ENCODE measurements at regions of chr7 and their contacts with region 1.

Region 1: GRCh38 chr7:90483251-90483650 is 13.8 kb downstream of the PTTG1IP2 start:
- DNase-seq: no peak
- ATAC-seq: no peak
- H3K4me3 ChIP-seq: no peak overlapping the region
- H3K27ac ChIP-seq: no peak overlapping the region
- H3K4me1 ChIP-seq: no peaks in the 10 kb centered on the region
- H3K27me3 ChIP-seq: no peaks in the 10 kb centered on the region
- CTCF ChIP-seq: no peak

Region 2: DNA sequence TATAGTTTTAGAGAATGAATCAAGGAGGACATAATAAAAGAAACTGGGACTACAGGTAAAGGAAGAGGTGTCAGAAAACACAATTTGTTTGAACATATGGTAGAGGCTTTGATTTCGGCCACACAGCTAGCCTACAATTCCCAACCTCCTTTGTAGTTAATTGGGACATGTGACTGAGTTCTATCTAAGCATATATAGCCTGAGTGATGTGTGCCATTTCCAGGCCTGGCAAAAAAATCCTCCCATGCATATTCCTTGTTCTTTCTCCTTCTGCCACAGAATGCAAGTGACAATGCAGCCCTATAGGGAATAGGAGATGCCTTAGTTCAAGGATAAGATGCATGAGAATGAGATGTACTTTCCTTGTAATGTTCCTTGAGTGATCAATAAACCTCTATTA is 919.7 kb before region 1 on chr7:
- intact Hi-C with region 1: loop called in 1 of 2 experiments (anchors 5 kb)
- DNase-seq: no peak
- ATAC-seq: no peak
- H3K4me3 ChIP-seq: no peak overlapping the region
- H3K27ac ChIP-seq: no peak overlapping the region
- H3K4me1 ChIP-seq: no peaks in the 10 kb centered on the region
- H3K27me3 ChIP-seq: no peaks in the 10 kb centered on the region
- CTCF ChIP-seq: no peak